Tibial artery (tissue), 4 donors: ENCODE measurements at regions of chr19 and their contacts with region 1.

Region 1: DNA sequence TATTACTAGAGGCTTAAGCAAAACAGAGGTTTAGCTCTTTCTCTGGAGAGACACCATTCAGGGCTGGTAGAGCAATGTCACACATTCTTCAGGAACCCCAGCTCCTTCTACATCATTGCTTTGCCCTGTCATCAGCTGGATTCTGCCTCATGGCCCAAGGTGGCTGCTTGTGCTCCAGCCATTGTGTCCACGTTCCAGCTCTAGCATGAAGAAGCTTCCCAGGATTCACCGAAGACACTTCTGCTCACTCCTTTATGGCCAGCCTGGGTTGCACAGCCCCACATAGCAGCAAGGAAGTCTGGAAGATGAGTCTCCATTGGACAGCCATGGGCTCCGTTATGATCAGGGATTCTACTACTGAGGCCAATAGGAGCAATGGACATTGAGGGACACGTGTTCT is 13.2 kb downstream of the PGLS start:
- DNase-seq: no peak
- H3K4me3 ChIP-seq: no peak overlapping the region
- H3K27ac ChIP-seq: no peak overlapping the region
- H3K4me1 ChIP-seq: peaks cover 0 to 5% (median 0%) of the 10 kb centered on the region in 4 donors
- H3K27me3 ChIP-seq: peaks cover 0 to 62% of the 10 kb centered on the region in 2 donors
- CTCF ChIP-seq: no peak

Region 2: DNA sequence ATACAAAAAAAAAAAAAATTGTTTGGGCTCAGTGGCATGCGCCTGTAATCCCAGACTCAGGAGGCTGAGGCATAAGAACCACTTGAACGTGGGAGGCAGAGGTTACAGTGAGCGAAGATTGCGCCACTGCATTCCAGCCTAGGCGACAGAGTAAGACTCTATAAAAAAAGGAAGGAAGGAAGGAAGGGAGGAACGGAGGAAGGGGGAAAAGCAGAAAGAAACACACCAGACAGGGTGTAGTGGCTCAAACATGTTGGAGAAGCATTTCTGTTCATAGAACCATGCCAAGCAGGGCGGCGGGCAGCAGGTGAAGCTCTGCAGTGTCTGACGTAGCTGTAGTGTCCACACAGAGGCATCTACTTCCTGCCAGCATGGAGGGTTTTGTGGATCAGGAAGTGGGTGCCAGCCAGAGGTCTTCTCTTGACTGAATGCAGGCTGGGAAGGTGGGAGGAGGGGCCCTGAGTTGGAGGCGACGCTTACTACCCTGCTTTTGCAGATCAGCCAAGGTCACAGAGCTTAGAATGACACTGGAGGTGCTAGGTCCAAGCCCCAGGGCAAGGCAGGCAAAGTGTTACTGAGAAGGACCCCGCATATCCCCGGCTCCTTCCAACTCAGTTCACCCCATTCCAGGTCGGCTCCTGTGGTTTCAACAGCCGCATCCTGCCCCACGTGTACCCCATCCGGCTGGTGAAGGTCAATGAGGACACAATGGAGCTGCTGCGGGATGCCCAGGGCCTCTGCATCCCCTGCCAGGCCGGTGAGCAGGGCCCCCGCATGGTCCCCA is 24.8 kb before region 1 on chr19:
- intact Hi-C with region 1: loop called (anchors 2 kb)
- DNase-seq: peak in 1 of 2 donors; percentile 38
- H3K4me3 ChIP-seq: no peak overlapping the region
- H3K27ac ChIP-seq: no peak overlapping the region
- H3K4me1 ChIP-seq: peaks cover 0 to 8% (median 3%) of the 10 kb centered on the region in 4 donors
- H3K27me3 ChIP-seq: no peaks in the 10 kb centered on the region
- CTCF ChIP-seq: no peak

Region 3: DNA sequence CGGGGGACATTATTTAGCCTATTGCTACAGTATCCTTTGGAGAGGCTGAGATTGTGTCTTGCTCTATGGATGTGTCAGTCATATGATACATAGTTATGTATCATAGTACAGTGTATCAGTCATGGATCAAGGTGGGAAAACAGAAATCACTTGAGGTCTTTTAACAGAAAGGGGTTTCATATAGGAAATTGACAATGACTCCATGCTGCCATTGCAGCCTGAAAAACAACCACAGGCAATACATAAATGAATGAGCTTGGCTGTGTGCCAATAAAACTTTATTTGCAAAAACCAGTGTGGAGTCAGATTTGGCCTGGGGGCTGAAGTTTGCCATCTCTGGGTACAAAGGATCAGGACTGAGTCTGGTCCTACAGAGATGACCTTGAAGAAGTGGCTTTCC is 66.2 kb after region 1 on chr19:
- intact Hi-C with region 1: no loop called
- DNase-seq: no peak
- H3K4me3 ChIP-seq: no peak overlapping the region
- H3K27ac ChIP-seq: no peak overlapping the region
- H3K4me1 ChIP-seq: no peaks in the 10 kb centered on the region
- H3K27me3 ChIP-seq: peaks cover 0 to 17% of the 10 kb centered on the region in 2 donors
- CTCF ChIP-seq: no peak